PC-9 (cell line): ENCODE measurements at regions of chr7 and their contacts with region 1.

Region 1: DNA sequence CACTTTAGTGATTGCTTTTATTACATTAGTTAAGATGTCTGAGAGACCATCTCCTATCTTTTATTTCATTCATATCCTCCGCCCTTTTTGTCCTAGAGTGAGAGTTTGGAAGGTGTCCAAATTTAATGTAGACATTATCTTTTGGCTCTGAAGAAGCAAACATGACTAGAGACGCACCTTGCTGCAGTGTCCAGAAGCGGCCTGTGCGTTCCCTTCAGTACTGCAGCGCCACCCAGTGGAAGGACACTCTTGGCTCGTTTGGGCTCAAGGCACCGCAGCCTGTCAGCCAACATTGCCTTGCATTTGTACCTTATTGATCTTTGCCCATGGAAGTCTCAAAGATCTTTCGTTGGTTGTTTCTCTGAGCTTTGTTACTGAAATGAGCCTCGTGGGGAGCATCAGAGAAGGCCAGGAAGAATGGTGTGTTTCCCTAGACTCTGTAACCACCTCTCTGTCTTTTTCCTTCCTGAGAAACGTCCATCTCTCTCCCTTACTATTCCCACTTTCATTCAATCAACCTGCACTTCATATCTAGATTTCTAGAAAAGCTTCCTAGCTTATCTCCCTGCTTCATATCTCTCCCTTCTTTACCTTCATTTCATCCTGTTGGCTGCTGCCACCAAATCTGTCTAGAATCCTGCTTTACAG is 10.4 kb upstream of the CLCN1 start:
- DNase-seq: peak in 1 of 2 experiments; percentile 72
- H3K4me3 ChIP-seq: no peak overlapping the region
- H3K27ac ChIP-seq: no peak overlapping the region
- H3K4me1 ChIP-seq: no peaks in the 10 kb centered on the region
- H3K27me3 ChIP-seq: no peaks in the 10 kb centered on the region
- CTCF ChIP-seq: peak; percentile 91

Region 2: DNA sequence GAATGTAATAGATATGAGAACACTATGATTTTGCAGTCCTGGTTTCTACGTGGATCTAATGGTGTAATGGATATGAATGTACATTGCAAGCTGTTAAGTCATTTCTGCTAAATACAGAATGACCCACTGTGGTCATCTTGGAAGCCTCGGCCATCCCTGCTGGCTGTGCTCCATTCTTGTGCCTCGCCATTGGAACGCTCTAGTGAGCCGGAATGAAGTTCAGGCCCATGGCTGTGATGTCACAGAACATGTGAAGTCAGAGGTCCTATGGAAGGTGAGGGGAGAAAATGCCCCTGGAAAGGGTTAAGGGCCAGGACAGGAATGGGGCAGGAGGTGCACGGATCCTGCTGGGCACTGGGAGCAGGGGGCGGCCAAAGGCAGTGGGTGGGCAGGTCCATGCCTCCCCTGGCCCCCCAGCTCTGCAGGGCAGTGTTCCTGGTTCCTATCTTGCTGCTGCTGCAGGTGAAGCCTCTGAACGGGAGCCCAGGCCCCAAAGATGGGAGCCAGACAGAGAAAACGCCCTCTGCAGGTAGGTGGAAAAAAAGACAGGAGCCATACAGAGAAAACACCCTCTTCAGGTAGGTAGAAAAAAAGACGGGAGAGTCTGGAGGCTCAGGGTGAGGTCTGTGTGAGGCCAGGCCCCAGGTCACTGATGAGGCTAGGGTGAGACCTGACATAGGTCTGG is 366.2 kb before region 1 on chr7 and contains the start of gene LLCFC1:
- CTCF ChIA-PET with region 1: no interaction called
- POLR2A ChIA-PET with region 1: no interaction called
- intact Hi-C with region 1: no loop called
- DNase-seq: peak; percentile 44 to 54
- H3K4me3 ChIP-seq: no peak within 1 kb of the TSS
- H3K27ac ChIP-seq: no peak within 1 kb of the TSS
- H3K4me1 ChIP-seq: no peaks in the 10 kb centered on the region
- H3K27me3 ChIP-seq: no peaks in the 10 kb centered on the region
- CTCF ChIP-seq: peak; percentile 70
- total RNA-seq, gene LLCFC1: not detected in 2 replicates

Region 3: GRCh38 chr7:142951276-142951675 is 354.3 kb before region 1 on chr7:
- CTCF ChIA-PET with region 1: interaction called, 13 read pairs
- POLR2A ChIA-PET with region 1: no interaction called
- intact Hi-C with region 1: no loop called
- DNase-seq: no peak
- H3K4me3 ChIP-seq: no peak overlapping the region
- H3K27ac ChIP-seq: no peak overlapping the region
- H3K4me1 ChIP-seq: peaks cover 8% of the 10 kb centered on the region
- H3K27me3 ChIP-seq: 0 out of 2 replicates have a peak, but pooled peaks cover 11% of the 10 kb centered on the region
- CTCF ChIP-seq: no peak

Region 4: DNA sequence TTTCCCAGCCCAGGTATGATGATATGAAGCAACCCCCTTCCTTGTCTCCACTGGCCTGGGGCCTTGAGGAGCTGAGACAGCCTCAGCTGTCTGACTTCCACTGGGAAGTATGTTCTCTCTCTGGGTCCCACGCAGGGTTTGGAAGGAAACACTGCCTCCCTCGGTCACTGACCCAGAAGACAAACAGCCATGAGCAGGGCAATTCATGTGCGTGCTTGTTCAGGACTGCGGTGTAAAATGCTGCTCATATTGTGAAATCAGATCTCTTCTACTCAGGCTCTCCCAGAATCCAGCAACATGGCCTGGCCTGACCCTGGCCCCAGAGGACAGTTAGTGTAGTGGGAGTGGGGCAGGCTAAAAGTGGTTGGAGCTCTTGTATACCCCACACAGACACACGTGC is 13.1 kb after region 1 on chr7:
- CTCF ChIA-PET with region 1: no interaction called
- POLR2A ChIA-PET with region 1: no interaction called
- intact Hi-C with region 1: no loop called
- DNase-seq: no peak
- H3K4me3 ChIP-seq: no peak overlapping the region
- H3K27ac ChIP-seq: no peak overlapping the region
- H3K4me1 ChIP-seq: no peaks in the 10 kb centered on the region; the same call in 1 of the 2 replicates
- H3K27me3 ChIP-seq: no peaks in the 10 kb centered on the region
- CTCF ChIP-seq: no peak

Region 5: DNA sequence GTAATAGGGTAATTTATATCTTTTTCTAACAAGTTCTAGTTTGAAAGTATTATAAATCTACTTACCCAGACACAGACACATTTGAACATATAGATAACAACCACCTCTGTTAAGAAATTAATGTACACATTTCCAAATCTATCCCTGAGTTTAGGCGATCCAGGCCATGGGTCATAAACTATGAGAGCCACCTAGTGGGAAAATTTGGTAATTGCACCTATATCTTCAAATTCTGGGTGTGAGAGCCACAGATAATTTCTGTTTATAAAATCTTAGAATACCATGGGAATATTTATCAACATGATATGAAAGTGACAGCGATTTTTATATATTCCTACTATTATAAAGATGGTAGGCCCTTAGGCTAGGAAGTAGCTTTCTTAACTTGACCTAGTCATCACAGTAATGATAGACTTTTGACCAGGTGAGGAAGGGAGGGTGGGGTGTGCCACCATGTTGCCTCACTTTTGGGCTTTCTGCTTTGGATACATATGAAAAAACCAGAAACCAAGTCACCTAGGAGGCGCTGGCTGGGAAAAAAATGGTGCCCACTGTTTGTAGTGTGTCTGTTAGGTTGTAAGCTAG is 111.1 kb after region 1 on chr7:
- CTCF ChIA-PET with region 1: interaction called, 6 read pairs
- POLR2A ChIA-PET with region 1: no interaction called
- intact Hi-C with region 1: loop called (anchors 2 kb)
- DNase-seq: peak in 1 of 2 experiments; percentile 49
- H3K4me3 ChIP-seq: no peak overlapping the region
- H3K27ac ChIP-seq: no peak overlapping the region
- H3K4me1 ChIP-seq: peaks cover 6% of the 10 kb centered on the region
- H3K27me3 ChIP-seq: no peaks in the 10 kb centered on the region
- CTCF ChIP-seq: peak; percentile 95